Caco-2 (cell line): ENCODE measurements at regions of chr11 and their contacts with region 1.

Region 1: DNA sequence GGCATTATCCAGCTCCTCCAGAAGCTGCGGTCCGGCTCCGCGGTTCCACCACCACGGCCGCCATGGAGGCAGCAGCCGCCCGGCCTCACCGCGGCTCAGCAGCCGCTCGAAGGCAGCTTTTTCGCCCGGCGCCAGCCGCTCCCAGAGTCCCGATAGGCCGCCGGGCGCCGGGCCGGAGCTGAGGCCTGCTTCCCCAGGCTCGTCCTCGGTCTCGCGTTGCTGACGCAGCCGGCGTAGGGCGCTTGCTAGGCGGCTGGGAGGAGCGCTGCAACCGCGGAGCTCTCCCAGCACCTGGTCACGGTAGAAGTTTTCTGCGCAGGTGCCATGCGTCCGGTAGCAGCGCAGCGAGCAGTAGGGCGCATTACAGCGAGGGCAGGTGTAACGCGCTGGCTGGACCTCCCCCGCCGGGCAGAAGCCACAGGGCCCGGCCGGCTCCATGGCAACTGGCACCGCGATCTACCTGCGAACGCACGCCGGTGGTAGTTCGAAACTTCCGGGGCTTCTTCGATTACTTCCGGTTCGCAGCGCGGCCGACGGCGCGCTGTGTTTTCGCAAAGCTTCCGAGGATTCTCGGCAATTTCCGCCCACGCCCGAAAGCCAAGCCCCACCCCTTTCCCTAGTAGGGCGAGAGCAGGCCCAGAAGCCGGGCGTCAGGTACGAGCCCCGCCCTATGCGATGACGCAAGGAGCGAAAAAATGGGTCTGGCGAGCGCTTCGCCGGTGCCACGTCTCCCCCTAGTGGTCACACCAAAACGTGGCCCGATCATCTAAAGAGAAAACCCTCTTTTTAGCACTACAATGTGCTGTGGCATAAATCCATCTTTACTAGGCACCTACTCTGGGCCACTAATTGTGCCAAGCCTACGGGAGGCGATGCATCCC is at the start of gene ZNHIT2:
- DNase-seq: peak; percentile 99
- H3K4me3 ChIP-seq: peak within 1 kb of the TSS; percentile 87
- H3K4me3 Mint-ChIP-seq: peak within 1 kb of the TSS; percentile 83
- H3K27ac Mint-ChIP-seq: peak within 1 kb of the TSS; percentile 92
- H3K4me1 ChIP-seq: peaks cover 25% of the 10 kb centered on the region
- H3K4me1 Mint-ChIP-seq: peaks cover 13% of the 10 kb centered on the region
- H3K27me3 ChIP-seq: no peaks in the 10 kb centered on the region
- H3K27me3 Mint-ChIP-seq: no peaks in the 10 kb centered on the region
- CTCF ChIP-seq: peak; percentile 93 to 94
- total RNA-seq, gene ZNHIT2: 12.2 and 14.7 TPM in 2 replicates

Region 2: GRCh38 chr11:64810271-64810890 is 307.1 kb before region 1 on chr11 and contains the start of gene MEN1:
- CTCF ChIA-PET with region 1: no interaction called
- POLR2A ChIA-PET with region 1: no interaction called
- intact Hi-C with region 1: loop called (anchors 1 kb)
- DNase-seq: peak; percentile 98 to 99
- H3K4me3 ChIP-seq: peak within 1 kb of the TSS; percentile 90
- H3K4me3 Mint-ChIP-seq: peak within 1 kb of the TSS; percentile 85
- H3K27ac Mint-ChIP-seq: peak within 1 kb of the TSS; percentile 34
- H3K4me1 ChIP-seq: peaks cover 2% of the 10 kb centered on the region
- H3K4me1 Mint-ChIP-seq: peaks cover 2% of the 10 kb centered on the region
- H3K27me3 ChIP-seq: no peaks in the 10 kb centered on the region
- H3K27me3 Mint-ChIP-seq: no peaks in the 10 kb centered on the region
- CTCF ChIP-seq: no peak
- total RNA-seq, gene MEN1: 32.7 and 36.8 TPM in 2 replicates

Region 3: DNA sequence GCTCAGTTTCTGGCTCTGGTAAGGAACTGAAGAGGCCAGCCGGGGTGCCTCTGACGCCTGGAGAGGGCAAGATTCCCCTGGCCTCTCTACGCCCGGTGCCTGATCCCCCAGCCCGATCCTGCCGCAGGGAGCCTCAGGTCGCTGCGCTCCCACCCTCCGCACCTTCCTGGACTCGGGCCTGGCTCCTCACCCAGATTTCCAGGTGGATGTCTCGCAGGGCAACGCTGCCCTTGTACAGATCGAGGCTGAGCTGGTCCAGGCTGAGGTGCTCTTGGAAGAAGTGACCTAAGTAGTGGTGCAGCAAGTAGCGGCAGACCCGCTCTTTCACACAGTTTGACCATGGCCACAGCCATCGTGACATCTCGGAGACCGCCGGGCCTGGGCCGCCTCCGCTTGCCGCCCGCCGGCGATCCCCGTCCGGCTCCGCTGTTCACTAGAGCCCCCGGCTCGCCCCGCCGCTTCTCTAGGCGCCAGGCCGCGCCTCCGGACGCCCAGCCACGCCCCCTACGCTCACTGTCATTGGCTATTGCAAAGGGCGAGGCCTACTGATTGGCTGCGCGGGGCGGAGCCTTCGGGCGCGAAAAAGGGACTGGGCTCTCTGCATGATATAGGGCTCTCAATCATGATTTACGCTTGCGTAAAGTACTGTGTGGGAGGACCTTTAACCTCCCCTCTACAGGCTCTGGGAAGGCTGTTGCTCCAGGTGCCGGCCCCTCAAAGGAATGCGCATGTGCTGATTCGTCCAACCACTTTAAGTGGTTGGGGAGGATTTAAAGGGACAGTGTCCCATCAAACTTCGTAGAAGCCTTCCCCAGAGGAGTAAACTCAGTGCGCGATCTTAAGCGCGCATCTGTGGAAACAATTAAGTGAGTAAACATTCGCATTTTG is 200.4 kb before region 1 on chr11 and contains the start of gene ATG2A:
- CTCF ChIA-PET with region 1: no interaction called
- POLR2A ChIA-PET with region 1: no interaction called
- intact Hi-C with region 1: no loop called
- DNase-seq: peak; percentile 99
- H3K4me3 ChIP-seq: peak within 1 kb of the TSS; percentile 93
- H3K4me3 Mint-ChIP-seq: peak within 1 kb of the TSS; percentile 91
- H3K27ac Mint-ChIP-seq: peak within 1 kb of the TSS; percentile 74
- H3K4me1 ChIP-seq: peaks cover 6% of the 10 kb centered on the region
- H3K4me1 Mint-ChIP-seq: no peaks in the 10 kb centered on the region
- H3K27me3 ChIP-seq: no peaks in the 10 kb centered on the region
- H3K27me3 Mint-ChIP-seq: no peaks in the 10 kb centered on the region
- CTCF ChIP-seq: no peak
- total RNA-seq, gene ATG2A: 27.9 and 31.1 TPM in 2 replicates

Region 4: DNA sequence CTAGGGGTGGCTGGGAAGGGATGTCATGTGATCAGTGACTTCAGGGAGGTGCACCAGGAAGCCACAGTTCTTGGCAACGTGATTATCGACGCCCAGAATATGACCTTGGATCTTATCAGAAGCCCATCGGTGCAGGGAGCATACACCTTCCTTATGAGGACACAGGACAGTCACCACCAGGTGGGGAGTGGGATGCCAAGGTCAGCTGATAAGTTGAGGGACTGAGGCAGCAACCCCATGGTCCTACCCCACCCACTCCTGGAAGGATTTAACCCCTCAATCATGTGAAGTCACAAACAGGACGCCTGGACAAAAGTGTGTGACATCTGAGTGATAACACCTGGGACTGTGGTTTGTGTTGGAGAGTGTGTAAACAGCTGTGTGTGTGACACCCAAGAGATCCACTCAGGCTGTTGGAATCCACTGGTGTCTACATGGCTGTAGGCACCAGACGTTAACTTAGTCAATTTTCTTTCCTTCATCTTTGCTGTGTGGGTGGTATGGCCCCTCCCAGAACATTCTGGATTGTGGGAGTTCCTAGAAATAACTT is 57.1 kb before region 1 on chr11:
- CTCF ChIA-PET with region 1: no interaction called
- POLR2A ChIA-PET with region 1: no interaction called
- intact Hi-C with region 1: no loop called
- DNase-seq: no peak
- H3K4me3 ChIP-seq: no peak overlapping the region
- H3K4me3 Mint-ChIP-seq: no peak overlapping the region
- H3K27ac Mint-ChIP-seq: no peak overlapping the region
- H3K4me1 ChIP-seq: no peaks in the 10 kb centered on the region
- H3K4me1 Mint-ChIP-seq: no peaks in the 10 kb centered on the region
- H3K27me3 ChIP-seq: no peaks in the 10 kb centered on the region
- H3K27me3 Mint-ChIP-seq: no peaks in the 10 kb centered on the region
- CTCF ChIP-seq: no peak

Region 5: GRCh38 chr11:65078151-65078550 is 39.3 kb before region 1 on chr11:
- CTCF ChIA-PET with region 1: no interaction called
- POLR2A ChIA-PET with region 1: no interaction called
- intact Hi-C with region 1: no loop called
- DNase-seq: peak; percentile 63 to 76
- H3K4me3 ChIP-seq: no peak overlapping the region
- H3K4me3 Mint-ChIP-seq: no peak overlapping the region
- H3K27ac Mint-ChIP-seq: peak overlapping the region; percentile 32
- H3K4me1 ChIP-seq: peaks cover 6% of the 10 kb centered on the region; the same call in 1 of the 2 replicates
- H3K4me1 Mint-ChIP-seq: peaks cover 18% of the 10 kb centered on the region
- H3K27me3 ChIP-seq: no peaks in the 10 kb centered on the region
- H3K27me3 Mint-ChIP-seq: no peaks in the 10 kb centered on the region
- CTCF ChIP-seq: peak; percentile 61 to 79

Region 6: GRCh38 chr11:65095974-65096806 is 21.3 kb before region 1 on chr11 and contains the start of gene VPS51:
- CTCF ChIA-PET with region 1: interaction called, 10 read pairs
- POLR2A ChIA-PET with region 1: interaction called, 6 read pairs
- intact Hi-C with region 1: loop called (anchors 1 kb)
- DNase-seq: peak; percentile 92 to 93
- H3K4me3 ChIP-seq: peak within 1 kb of the TSS; percentile 56
- H3K4me3 Mint-ChIP-seq: peak within 1 kb of the TSS; percentile 86
- H3K27ac Mint-ChIP-seq: peak within 1 kb of the TSS; percentile 90
- H3K4me1 ChIP-seq: peaks cover 10% of the 10 kb centered on the region
- H3K4me1 Mint-ChIP-seq: peaks cover 12% of the 10 kb centered on the region
- H3K27me3 ChIP-seq: no peaks in the 10 kb centered on the region
- H3K27me3 Mint-ChIP-seq: no peaks in the 10 kb centered on the region
- CTCF ChIP-seq: no peak
- total RNA-seq, gene VPS51: 147 and 158 TPM in 2 replicates

Region 7: GRCh38 chr11:65134386-65135253 is 17.2 kb after region 1 on chr11 and contains the start of gene SYVN1:
- CTCF ChIA-PET with region 1: interaction called, 11 read pairs
- POLR2A ChIA-PET with region 1: interaction called, 48 read pairs
- intact Hi-C with region 1: no loop called
- DNase-seq: peak; percentile 94 to 96
- H3K4me3 ChIP-seq: peak within 1 kb of the TSS; percentile 99
- H3K4me3 Mint-ChIP-seq: peak within 1 kb of the TSS; percentile 93
- H3K27ac Mint-ChIP-seq: peak within 1 kb of the TSS; percentile 100
- H3K4me1 ChIP-seq: 0 out of 2 replicates have a peak, but pooled peaks cover 5% of the 10 kb centered on the region
- H3K4me1 Mint-ChIP-seq: peaks cover 8% of the 10 kb centered on the region
- H3K27me3 ChIP-seq: no peaks in the 10 kb centered on the region
- H3K27me3 Mint-ChIP-seq: no peaks in the 10 kb centered on the region
- CTCF ChIP-seq: no peak
- total RNA-seq, gene SYVN1: 50.9 and 56.5 TPM in 2 replicates

Region 8: GRCh38 chr11:65150509-65151271 is 33.2 kb after region 1 on chr11:
- CTCF ChIA-PET with region 1: no interaction called
- POLR2A ChIA-PET with region 1: no interaction called
- intact Hi-C with region 1: no loop called
- DNase-seq: no peak
- H3K4me3 ChIP-seq: no peak overlapping the region
- H3K4me3 Mint-ChIP-seq: no peak overlapping the region
- H3K27ac Mint-ChIP-seq: no peak overlapping the region
- H3K4me1 ChIP-seq: no peaks in the 10 kb centered on the region
- H3K4me1 Mint-ChIP-seq: peaks cover 6% of the 10 kb centered on the region
- H3K27me3 ChIP-seq: no peaks in the 10 kb centered on the region; the same call in none of the 2 replicates
- H3K27me3 Mint-ChIP-seq: no peaks in the 10 kb centered on the region
- CTCF ChIP-seq: no peak

Region 9: DNA sequence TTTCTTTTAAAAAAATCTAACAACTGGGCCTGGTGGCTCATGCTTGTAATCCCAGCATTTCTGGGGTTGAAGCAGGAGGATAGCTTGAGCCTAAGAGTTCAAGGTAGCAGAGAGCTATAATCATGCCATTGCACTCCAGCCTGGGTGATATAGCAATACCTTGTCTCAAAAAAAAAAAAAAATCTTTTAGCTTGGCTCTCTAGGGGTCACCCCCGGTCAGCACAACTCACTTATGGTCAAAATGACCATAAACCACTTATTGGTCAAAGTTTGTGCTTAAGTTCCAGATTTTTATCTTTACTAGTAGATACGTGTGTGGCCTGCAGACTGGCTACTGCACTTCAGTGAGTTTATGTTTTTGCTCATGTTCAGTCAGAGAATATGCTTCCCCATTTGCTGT is 46.2 kb after region 1 on chr11:
- CTCF ChIA-PET with region 1: interaction called, 3 read pairs
- POLR2A ChIA-PET with region 1: interaction called, 4 read pairs
- intact Hi-C with region 1: loop called (anchors 1 kb)
- DNase-seq: no peak
- H3K4me3 ChIP-seq: no peak overlapping the region
- H3K4me3 Mint-ChIP-seq: no peak overlapping the region
- H3K27ac Mint-ChIP-seq: no peak overlapping the region
- H3K4me1 ChIP-seq: no peaks in the 10 kb centered on the region
- H3K4me1 Mint-ChIP-seq: peaks cover 8% of the 10 kb centered on the region
- H3K27me3 ChIP-seq: no peaks in the 10 kb centered on the region
- H3K27me3 Mint-ChIP-seq: no peaks in the 10 kb centered on the region
- CTCF ChIP-seq: no peak

Region 10: GRCh38 chr11:65180877-65181568 is 63.6 kb after region 1 on chr11:
- CTCF ChIA-PET with region 1: interaction called, 7 read pairs
- POLR2A ChIA-PET with region 1: interaction called, 9 read pairs
- intact Hi-C with region 1: loop called (anchors 2 kb)
- DNase-seq: peak; percentile 86 to 93
- H3K4me3 ChIP-seq: peak overlapping the region; percentile 84
- H3K4me3 Mint-ChIP-seq: peak overlapping the region; percentile 85
- H3K27ac Mint-ChIP-seq: peak overlapping the region; percentile 90
- H3K4me1 ChIP-seq: peaks cover 13% of the 10 kb centered on the region
- H3K4me1 Mint-ChIP-seq: no peaks in the 10 kb centered on the region
- H3K27me3 ChIP-seq: no peaks in the 10 kb centered on the region
- H3K27me3 Mint-ChIP-seq: no peaks in the 10 kb centered on the region
- CTCF ChIP-seq: peak; percentile 63 to 83

Region 11: GRCh38 chr11:65251476-65251875 is 134.0 kb after region 1 on chr11:
- CTCF ChIA-PET with region 1: no interaction called
- POLR2A ChIA-PET with region 1: no interaction called
- intact Hi-C with region 1: loop called (anchors 5 kb)
- DNase-seq: no peak
- H3K4me3 ChIP-seq: no peak overlapping the region
- H3K4me3 Mint-ChIP-seq: no peak overlapping the region
- H3K27ac Mint-ChIP-seq: no peak overlapping the region
- H3K4me1 ChIP-seq: peaks cover 12% of the 10 kb centered on the region
- H3K4me1 Mint-ChIP-seq: peaks cover 3% of the 10 kb centered on the region
- H3K27me3 ChIP-seq: no peaks in the 10 kb centered on the region
- H3K27me3 Mint-ChIP-seq: no peaks in the 10 kb centered on the region
- CTCF ChIP-seq: no peak